ENCODE measurements at regions of chr6 and their contacts with region 1.

Region 1: GRCh38 chr6:136751522-136751956 is 40.7 kb downstream of the MAP3K5 start:
- DNase-seq: peak in 7 of 9 donors; percentile 28 to 78 (median 68)
- ATAC-seq: peak; percentile 71
- H3K4me3 ChIP-seq: peak overlapping the region; percentile 37
- H3K4me3 Mint-ChIP-seq: peak overlapping the region; percentile 22 to 87 (median 72)
- H3K27ac ChIP-seq: peak overlapping the region; percentile 60
- H3K27ac Mint-ChIP-seq: peak overlapping the region; percentile 78 to 98 (median 91)
- H3K4me1 ChIP-seq: peaks cover 37 to 51% of the 10 kb centered on the region in 2 donors
- H3K4me1 Mint-ChIP-seq: peaks cover 58 to 84% (median 65%) of the 10 kb centered on the region in 7 donors
- H3K27me3 ChIP-seq: no peaks in the 10 kb centered on the region
- H3K27me3 Mint-ChIP-seq: no peaks in the 10 kb centered on the region

Region 2: DNA sequence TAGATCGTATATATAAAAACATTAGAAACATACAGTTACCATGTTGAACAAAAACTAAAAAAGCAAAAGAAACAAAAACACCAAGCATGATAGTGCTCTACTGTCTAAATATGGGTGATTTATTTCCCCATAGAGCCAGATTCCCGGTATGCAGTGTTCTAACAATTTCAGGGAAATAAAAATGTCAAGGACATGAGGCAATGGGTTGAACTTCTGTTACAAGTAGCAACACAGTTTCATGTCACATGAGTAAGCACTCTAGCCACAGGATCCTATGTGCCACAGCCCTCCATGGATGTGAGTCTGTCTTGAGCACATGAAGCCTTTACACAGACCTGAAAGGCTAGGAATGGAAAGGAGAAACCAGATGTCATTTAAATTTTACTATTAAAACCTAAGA is 55.3 kb before region 1 on chr6:
- CTCF ChIA-PET with region 1: no interaction called
- POLR2A ChIA-PET with region 1: interaction called, 3 read pairs
- intact Hi-C with region 1: loop called in 1 of 2 experiments (anchors 2 kb)
- DNase-seq: no peak
- ATAC-seq: no peak
- H3K4me3 ChIP-seq: no peak overlapping the region
- H3K4me3 Mint-ChIP-seq: no peak overlapping the region
- H3K27ac ChIP-seq: no peak overlapping the region
- H3K27ac Mint-ChIP-seq: no peak overlapping the region
- H3K4me1 ChIP-seq: peaks cover 0 to 5% of the 10 kb centered on the region in 2 donors
- H3K4me1 Mint-ChIP-seq: peaks cover 0 to 30% (median 12%) of the 10 kb centered on the region in 7 donors
- H3K27me3 ChIP-seq: no peaks in the 10 kb centered on the region
- H3K27me3 Mint-ChIP-seq: no peaks in the 10 kb centered on the region

Region 3: DNA sequence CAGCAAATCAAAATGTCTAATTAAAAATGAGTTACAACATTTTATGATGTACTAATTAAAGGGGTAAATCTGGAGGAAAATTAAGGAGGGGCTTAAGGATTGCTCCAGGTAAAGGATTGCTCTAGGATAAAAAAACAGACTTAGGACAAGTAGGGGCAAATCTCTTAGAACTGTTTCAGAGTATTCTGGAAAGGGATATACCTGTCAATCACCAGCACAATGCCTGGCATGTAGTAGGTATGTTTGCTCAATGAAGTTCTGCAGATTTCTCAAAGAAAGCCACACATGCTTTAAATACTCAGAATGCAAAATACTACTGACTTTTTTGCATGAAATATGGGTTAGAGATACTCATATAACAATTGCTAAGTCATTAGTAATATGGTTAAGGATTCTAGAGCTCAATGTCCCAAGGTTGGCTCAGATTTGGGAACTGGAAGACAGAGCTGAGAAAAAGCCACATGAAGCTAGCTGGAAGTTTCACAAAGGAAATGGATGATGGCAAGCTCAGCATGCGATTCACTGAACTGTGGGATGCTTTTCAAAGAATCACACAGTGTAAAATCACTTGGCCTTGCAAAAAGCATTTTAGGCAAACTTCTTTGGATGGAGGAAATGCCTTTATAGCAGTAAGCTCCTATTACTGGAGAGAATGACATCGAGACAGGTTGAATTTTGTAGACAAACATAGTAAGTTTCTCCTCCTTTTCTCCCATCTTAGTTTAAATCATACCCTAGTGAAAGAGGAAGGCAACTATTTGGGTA is 32.1 kb before region 1 on chr6:
- CTCF ChIA-PET with region 1: no interaction called
- POLR2A ChIA-PET with region 1: no interaction called
- intact Hi-C with region 1: loop called in 1 of 2 experiments (anchors 2 kb)
- DNase-seq: no peak
- ATAC-seq: peak; percentile 10
- H3K4me3 ChIP-seq: no peak overlapping the region
- H3K4me3 Mint-ChIP-seq: peak overlapping the region in 1 of 10 donors; percentile 55
- H3K27ac ChIP-seq: no peak overlapping the region
- H3K27ac Mint-ChIP-seq: peak overlapping the region in 1 of 9 donors; percentile 43
- H3K4me1 ChIP-seq: peaks cover 0 to 18% of the 10 kb centered on the region in 2 donors
- H3K4me1 Mint-ChIP-seq: peaks cover 11 to 61% (median 33%) of the 10 kb centered on the region in 7 donors
- H3K27me3 ChIP-seq: no peaks in the 10 kb centered on the region
- H3K27me3 Mint-ChIP-seq: no peaks in the 10 kb centered on the region

Region 4: DNA sequence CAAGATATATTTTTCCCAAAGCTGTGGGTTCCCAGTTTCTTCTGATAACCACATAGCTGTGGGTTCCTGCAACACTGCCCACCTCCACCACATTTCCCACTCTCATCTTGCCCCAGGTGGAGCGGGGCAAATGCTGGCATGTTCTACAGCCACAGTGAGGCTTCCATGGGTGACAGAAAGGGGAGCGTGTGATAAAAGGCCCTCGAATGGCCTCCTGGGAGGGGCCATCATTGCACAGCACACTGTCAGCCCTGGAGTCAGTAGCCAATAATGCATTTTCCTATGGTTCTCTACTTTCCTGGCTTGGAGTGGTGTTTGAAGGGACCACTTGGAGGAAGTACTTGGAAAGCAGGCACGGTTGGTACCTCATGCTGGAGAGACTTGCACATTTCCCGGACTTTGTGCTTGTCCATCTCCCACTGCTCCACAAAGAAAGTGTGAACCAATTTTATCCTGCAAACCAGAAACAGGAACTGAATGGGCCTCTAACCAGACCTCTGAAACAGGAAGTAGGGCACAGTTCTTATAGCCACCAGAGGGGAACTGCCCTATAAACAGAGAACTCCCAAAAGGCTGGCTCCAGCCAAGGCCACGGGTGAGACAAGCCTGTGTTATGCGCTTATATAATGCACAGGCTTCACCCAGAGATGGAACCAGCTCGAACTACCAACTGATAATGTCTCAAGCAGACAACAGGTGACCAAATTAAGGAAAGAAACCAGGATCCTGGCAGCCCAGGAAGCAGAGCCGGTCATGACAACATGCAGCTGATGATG is 32.1 kb after region 1 on chr6:
- CTCF ChIA-PET with region 1: interaction called, 3 read pairs
- POLR2A ChIA-PET with region 1: interaction called, 10 read pairs
- intact Hi-C with region 1: loop called (anchors 1 kb)
- DNase-seq: no peak
- ATAC-seq: peak; percentile 82
- H3K4me3 ChIP-seq: peak overlapping the region; percentile 31
- H3K4me3 Mint-ChIP-seq: peak overlapping the region; percentile 45 to 85 (median 56)
- H3K27ac ChIP-seq: no peak overlapping the region
- H3K27ac Mint-ChIP-seq: peak overlapping the region in 3 of 9 donors; percentile 66 to 84 (median 76)
- H3K4me1 ChIP-seq: peaks cover 38 to 56% of the 10 kb centered on the region in 2 donors
- H3K4me1 Mint-ChIP-seq: peaks cover 51 to 76% (median 63%) of the 10 kb centered on the region in 7 donors
- H3K27me3 ChIP-seq: no peaks in the 10 kb centered on the region
- H3K27me3 Mint-ChIP-seq: no peaks in the 10 kb centered on the region

Region 5: GRCh38 chr6:136952714-136953260 is 201.2 kb after region 1 on chr6:
- CTCF ChIA-PET with region 1: no interaction called
- POLR2A ChIA-PET with region 1: no interaction called
- intact Hi-C with region 1: no loop called
- DNase-seq: no peak
- ATAC-seq: no peak
- H3K4me3 ChIP-seq: no peak overlapping the region
- H3K4me3 Mint-ChIP-seq: no peak overlapping the region
- H3K27ac ChIP-seq: no peak overlapping the region
- H3K27ac Mint-ChIP-seq: no peak overlapping the region
- H3K4me1 ChIP-seq: no peaks in the 10 kb centered on the region
- H3K4me1 Mint-ChIP-seq: peaks cover 0 to 8% (median 7%) of the 10 kb centered on the region in 7 donors
- H3K27me3 ChIP-seq: no peaks in the 10 kb centered on the region
- H3K27me3 Mint-ChIP-seq: peaks cover 0 to 29% (median 12%) of the 10 kb centered on the region in 5 donors